ENCODE measurements at regions of chr1 and their contacts with region 1.

Region 1: GRCh38 chr1:210400043-210400840 is 71.5 kb downstream of the HHAT start:
- DNase-seq: peak; percentile 53 to 87 (median 71)
- H3K4me3 ChIP-seq: no peak overlapping the region
- H3K27ac ChIP-seq: no peak overlapping the region
- H3K4me1 ChIP-seq: peaks cover 0 to 10% of the 10 kb centered on the region in 2 donors
- H3K27me3 ChIP-seq: no peaks in the 10 kb centered on the region
- CTCF ChIP-seq: peak; percentile 67 to 92 (median 86)
- POLR2A ChIP-seq: no peak

Region 2: GRCh38 chr1:210143465-210144062 is 256.7 kb before region 1 on chr1:
- intact Hi-C with region 1: loop called in 1 of 2 experiments (anchors 10 kb)
- DNase-seq: peak; percentile 49 to 92 (median 81)
- H3K4me3 ChIP-seq: no peak overlapping the region
- H3K27ac ChIP-seq: no peak overlapping the region
- H3K4me1 ChIP-seq: no peaks in the 10 kb centered on the region
- H3K27me3 ChIP-seq: no peaks in the 10 kb centered on the region
- CTCF ChIP-seq: peak; percentile 41 to 69 (median 58)
- POLR2A ChIP-seq: no peak

Region 3: DNA sequence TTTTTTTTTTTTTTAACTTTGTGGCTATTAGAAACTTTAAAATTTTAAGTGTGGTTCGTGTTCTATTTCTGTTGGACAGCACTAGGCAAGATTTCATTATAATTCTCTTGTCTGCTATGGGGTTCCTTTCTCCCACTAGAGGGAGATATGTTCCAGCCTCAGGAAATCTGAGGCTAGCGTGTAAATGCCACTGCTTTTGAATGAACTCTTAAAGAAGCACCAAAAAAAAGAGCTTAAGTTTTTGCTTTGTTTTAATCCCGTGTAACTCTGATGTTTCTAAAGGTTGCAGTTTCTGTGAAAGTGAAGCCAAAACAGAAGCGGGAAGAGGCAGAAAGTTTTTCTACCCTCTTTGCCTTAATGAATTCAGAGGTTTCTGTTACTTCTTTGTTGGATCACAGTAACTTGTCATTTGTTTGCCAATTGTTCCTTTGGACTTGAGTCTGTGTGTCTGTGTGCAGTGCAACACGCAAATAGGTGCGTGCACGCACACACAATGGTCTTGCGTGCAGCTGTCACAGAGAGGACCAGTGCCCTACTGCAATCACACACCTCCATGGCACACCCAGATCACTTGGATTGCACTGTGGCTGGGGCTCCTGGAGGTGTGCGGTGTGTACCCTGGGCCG is 39.3 kb before region 1 on chr1:
- intact Hi-C with region 1: loop called (anchors 2 to 5 kb)
- DNase-seq: peak in 1 of 7 donors; percentile 38
- H3K4me3 ChIP-seq: no peak overlapping the region
- H3K27ac ChIP-seq: no peak overlapping the region
- H3K4me1 ChIP-seq: peaks cover 6 to 14% of the 10 kb centered on the region in 2 donors
- H3K27me3 ChIP-seq: no peaks in the 10 kb centered on the region
- CTCF ChIP-seq: peak; percentile 63 to 77 (median 71)
- POLR2A ChIP-seq: no peak

Region 4: GRCh38 chr1:211133836-211134669 is 733.8 kb after region 1 on chr1 and contains the start of gene KCNH1:
- intact Hi-C with region 1: loop called in 1 of 2 experiments (anchors 10 kb)
- DNase-seq: peak; percentile 45 to 91 (median 73)
- H3K4me3 ChIP-seq: peak within 1 kb of the TSS in 2 of 4 donors; percentile 30 to 52
- H3K27ac ChIP-seq: no peak within 1 kb of the TSS
- H3K4me1 ChIP-seq: peaks cover 9 to 15% of the 10 kb centered on the region in 2 donors
- H3K27me3 ChIP-seq: peaks cover 22% of the 10 kb centered on the region
- CTCF ChIP-seq: peak; percentile 25 to 96 (median 80)
- POLR2A ChIP-seq: no peak
- total RNA-seq, gene KCNH1: 0.15 to 2.2 (median 0.83) TPM in 5 of 9 donors, not detected in the others